PC-3 (cell line): ENCODE measurements at regions of chr11 and their contacts with region 1.

Region 1: DNA sequence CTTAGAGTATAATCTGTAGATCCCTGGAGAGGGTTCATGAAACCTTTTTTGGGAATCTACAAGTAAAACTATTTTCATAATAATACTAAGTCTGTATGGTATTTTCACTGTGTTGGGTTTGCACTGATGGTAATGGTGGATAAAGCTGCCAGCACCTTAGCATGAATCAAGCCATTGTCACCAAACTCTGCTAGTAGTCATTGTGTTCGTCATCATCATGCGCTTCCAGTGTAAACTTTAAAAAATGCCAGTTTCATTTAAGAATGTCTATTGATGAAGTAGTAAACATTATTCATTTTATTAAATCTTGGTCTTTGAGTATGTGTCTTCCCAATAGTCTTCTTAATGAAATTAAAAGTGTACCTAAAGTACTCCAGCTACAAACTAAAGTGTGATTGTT is 15.0 kb downstream of the ALKBH3 start:
- DNase-seq: no peak
- ATAC-seq: no peak
- H3K4me3 ChIP-seq: no peak overlapping the region
- H3K27ac ChIP-seq: no peak overlapping the region
- H3K4me1 ChIP-seq: no peaks in the 10 kb centered on the region
- H3K27me3 ChIP-seq: no peaks in the 10 kb centered on the region
- CTCF ChIP-seq: no peak

Region 2: DNA sequence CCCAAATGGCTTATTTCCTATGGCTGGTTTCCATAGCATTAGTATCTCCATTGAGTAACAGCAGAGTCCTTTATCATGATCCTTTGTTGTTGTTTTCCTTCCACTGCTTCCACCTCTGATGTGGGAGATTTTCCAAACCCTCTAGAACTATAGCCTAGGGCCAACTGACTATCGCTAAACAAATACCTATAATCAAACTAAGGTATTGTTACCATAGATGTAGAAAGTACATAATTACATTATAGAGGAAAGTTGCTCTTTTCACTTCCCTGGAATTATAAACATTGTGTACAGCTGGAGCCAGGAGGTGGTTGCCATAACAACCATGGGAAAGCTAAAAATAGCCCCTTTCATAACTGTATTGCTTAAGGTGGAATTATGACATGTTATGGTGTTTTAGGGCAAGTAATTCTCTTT is 61.9 kb before region 1 on chr11:
- CTCF ChIA-PET with region 1: no interaction called
- POLR2A ChIA-PET with region 1: no interaction called
- intact Hi-C with region 1: no loop called
- DNase-seq: peak; percentile 15
- ATAC-seq: no peak
- H3K4me3 ChIP-seq: no peak overlapping the region
- H3K27ac ChIP-seq: no peak overlapping the region
- H3K4me1 ChIP-seq: peaks cover 20% of the 10 kb centered on the region
- H3K27me3 ChIP-seq: no peaks in the 10 kb centered on the region
- CTCF ChIP-seq: no peak

Region 3: GRCh38 chr11:43944761-43945311 is 49.2 kb after region 1 on chr11:
- CTCF ChIA-PET with region 1: no interaction called
- POLR2A ChIA-PET with region 1: no interaction called
- intact Hi-C with region 1: loop called (anchors 2 kb)
- DNase-seq: peak; percentile 61
- ATAC-seq: peak; percentile 41
- H3K4me3 ChIP-seq: peak overlapping the region; percentile 62; the same call in 1 of the 2 replicates
- H3K27ac ChIP-seq: no peak overlapping the region
- H3K4me1 ChIP-seq: peaks cover 15% of the 10 kb centered on the region; the same call in 1 of the 2 replicates
- H3K27me3 ChIP-seq: peaks cover 33% of the 10 kb centered on the region
- CTCF ChIP-seq: peak; percentile 92

Region 4: GRCh38 chr11:44036811-44037657 is 141.4 kb after region 1 on chr11:
- CTCF ChIA-PET with region 1: no interaction called
- POLR2A ChIA-PET with region 1: no interaction called
- intact Hi-C with region 1: loop called (anchors 1 kb)
- DNase-seq: peak; percentile 79
- ATAC-seq: peak; percentile 97
- H3K4me3 ChIP-seq: no peak overlapping the region
- H3K27ac ChIP-seq: no peak overlapping the region
- H3K4me1 ChIP-seq: no peaks in the 10 kb centered on the region
- H3K27me3 ChIP-seq: no peaks in the 10 kb centered on the region
- CTCF ChIP-seq: peak; percentile 84